Activated CD4-positive, alpha-beta T cell treated with anti-CD3 and anti-CD28 coated beads for 36 hours (primary cell): ENCODE measurements at regions of chr19 and their contacts with region 1.

Region 1: DNA sequence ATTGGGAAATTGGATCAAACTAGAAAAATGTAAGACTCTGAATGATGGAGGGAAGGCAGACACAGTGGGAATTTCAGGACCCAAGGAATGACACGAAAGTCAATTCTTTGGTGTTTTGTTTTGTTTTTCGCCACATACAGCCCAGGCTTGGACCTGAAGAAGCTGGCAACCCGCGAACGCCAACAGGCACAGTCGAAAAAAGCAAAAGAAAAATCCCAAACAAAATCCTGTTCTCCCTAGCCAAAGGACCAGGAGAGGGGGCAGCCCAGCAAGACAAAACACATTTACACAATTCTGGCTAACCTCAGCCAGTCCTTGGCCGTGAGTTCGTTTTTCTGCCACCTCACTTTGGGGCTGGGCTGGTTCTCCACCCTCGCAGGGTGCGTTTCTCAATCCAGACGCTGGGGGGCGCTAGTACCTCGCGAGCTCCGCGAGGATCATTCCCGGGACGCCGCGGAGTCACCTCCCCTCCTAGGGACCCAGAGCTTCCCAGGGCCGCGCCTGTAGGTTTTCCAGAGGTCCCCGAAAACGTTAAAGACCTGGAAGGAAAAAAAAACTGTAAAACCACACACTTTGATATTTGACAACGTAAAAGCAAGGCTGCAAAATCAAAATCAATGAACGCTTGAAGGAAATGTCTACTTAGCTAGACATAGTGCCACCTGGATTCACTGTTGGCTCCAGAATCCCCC is 34.9 kb upstream of the TPM4 start:
- DNase-seq: peak; percentile 87
- ATAC-seq: peak; percentile 85
- H3K4me3 Mint-ChIP-seq: no peak overlapping the region
- H3K27ac Mint-ChIP-seq: no peak overlapping the region
- H3K4me1 Mint-ChIP-seq: peaks cover 4% of the 10 kb centered on the region
- H3K27me3 Mint-ChIP-seq: peaks cover 2% of the 10 kb centered on the region

Region 2: DNA sequence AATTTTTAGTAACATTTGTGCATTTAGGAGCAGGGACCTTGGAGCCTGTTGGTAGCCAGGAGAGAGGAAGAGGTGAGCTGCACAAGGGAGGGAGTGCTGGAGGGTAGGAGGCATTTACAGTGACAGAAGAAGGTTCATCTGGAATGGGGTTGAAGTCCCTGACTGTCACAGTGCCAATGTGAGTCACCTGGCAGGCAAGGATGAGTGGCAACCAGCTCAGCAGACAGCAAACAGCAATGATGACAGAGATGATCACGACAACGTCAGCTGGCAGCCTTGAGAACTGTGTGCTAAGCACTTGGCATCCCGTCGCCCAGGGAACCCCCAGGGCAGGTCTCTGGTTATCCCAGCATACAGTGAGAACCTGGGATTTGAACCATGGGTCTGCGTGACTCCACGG is 251.3 kb before region 1 on chr19:
- CTCF ChIA-PET with region 1: no interaction called
- POLR2A ChIA-PET with region 1: no interaction called
- intact Hi-C with region 1: no loop called
- DNase-seq: no peak
- ATAC-seq: no peak
- H3K4me3 Mint-ChIP-seq: no peak overlapping the region
- H3K27ac Mint-ChIP-seq: no peak overlapping the region
- H3K4me1 Mint-ChIP-seq: no peaks in the 10 kb centered on the region
- H3K27me3 Mint-ChIP-seq: peaks cover 2% of the 10 kb centered on the region

Region 3: DNA sequence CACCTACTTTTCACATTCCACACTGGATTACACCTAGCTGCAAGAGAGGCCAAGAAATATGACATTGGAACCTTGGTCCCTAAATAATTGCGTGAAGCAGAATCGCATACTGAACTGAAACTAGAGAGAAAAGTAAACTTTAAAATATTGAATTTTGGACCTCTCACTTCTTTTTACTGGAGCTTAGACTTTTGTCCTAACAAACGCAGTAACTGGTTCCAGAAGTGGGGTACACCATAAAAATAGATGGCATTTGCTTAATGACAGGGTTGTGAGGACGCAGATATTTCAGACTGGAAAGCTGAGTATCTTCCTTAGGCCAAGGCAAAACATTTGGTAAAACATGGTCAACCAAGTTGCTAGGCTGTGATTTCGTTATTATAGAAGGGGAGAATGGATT is 15.6 kb after region 1 on chr19:
- CTCF ChIA-PET with region 1: interaction called, 23 read pairs
- POLR2A ChIA-PET with region 1: interaction called, 3 read pairs
- intact Hi-C with region 1: no loop called
- DNase-seq: no peak
- ATAC-seq: no peak
- H3K4me3 Mint-ChIP-seq: no peak overlapping the region
- H3K27ac Mint-ChIP-seq: no peak overlapping the region
- H3K4me1 Mint-ChIP-seq: peaks cover 4% of the 10 kb centered on the region
- H3K27me3 Mint-ChIP-seq: no peaks in the 10 kb centered on the region

Region 4: DNA sequence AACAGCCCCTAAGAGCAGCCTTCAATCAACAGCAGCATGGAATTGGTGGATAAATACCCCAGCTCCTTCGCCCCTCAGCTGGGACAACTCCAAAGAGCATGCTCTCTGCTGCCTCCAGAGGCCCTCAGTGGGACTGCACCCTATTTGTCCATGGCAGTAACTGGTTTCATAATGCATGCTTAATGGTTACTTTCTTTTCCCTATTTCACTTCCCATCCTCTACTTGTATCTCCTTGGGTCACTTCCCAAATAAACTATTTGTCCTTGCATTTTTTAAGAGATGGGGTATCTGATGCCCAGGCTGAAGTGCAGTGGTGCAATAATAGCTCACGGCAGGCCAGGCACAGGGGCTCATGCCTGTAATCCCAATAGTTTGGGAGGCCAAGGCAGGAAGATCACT is 21.3 kb after region 1 on chr19:
- CTCF ChIA-PET with region 1: interaction called, 23 read pairs
- POLR2A ChIA-PET with region 1: no interaction called
- intact Hi-C with region 1: no loop called
- DNase-seq: peak; percentile 84
- ATAC-seq: peak; percentile 38
- H3K4me3 Mint-ChIP-seq: no peak overlapping the region
- H3K27ac Mint-ChIP-seq: no peak overlapping the region
- H3K4me1 Mint-ChIP-seq: peaks cover 24% of the 10 kb centered on the region
- H3K27me3 Mint-ChIP-seq: no peaks in the 10 kb centered on the region

Region 5: DNA sequence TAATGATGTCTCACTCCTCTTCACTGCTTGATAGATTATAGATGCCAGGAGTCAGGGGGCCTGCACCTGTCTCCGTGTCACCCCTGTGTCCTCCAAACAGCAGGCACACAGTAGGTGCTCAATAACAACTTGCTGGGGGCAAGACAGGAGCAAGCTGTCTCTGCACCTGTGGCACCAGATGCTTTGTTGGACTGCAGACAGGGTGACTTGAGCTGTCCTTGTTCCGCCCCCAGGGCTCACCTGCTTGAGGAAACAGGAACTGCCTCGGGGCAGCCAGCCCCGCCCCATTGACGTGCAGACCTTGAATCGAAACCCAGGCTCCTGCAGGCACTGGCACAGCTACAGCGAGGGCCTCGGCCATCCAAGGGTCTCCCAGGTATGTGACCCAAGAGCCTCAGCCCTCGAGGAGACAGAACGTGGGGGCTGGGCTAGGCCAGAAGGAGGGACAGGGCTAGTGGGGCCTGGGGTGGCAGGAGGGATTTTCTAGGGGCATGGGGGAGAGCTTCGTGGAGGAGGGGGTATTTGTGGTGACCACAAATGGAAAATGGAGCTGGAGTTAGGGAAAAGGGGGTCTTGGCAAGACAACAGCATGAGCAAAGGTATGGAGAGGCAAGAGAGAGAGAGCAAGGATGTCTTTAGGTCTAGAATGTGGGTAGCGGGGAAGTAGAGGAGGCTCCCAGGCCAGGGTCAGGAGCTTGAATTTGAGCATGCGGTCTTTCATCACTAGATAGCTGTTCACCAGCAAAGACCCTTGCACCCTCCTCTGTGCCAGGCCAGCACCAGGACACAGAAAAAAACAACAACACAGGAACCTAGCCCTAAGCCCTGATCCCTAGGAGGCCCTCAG is 102.2 kb after region 1 on chr19 and contains the start of gene HSH2D:
- CTCF ChIA-PET with region 1: interaction called, 12 read pairs
- POLR2A ChIA-PET with region 1: no interaction called
- intact Hi-C with region 1: no loop called
- DNase-seq: peak; percentile 91
- ATAC-seq: peak; percentile 100
- H3K4me3 Mint-ChIP-seq: peak within 1 kb of the TSS; percentile 94
- H3K27ac Mint-ChIP-seq: peak within 1 kb of the TSS; percentile 93
- H3K4me1 Mint-ChIP-seq: peaks cover 24% of the 10 kb centered on the region
- H3K27me3 Mint-ChIP-seq: no peaks in the 10 kb centered on the region
- total RNA-seq, gene HSH2D: 31.2 to 38.2 TPM

Region 6: DNA sequence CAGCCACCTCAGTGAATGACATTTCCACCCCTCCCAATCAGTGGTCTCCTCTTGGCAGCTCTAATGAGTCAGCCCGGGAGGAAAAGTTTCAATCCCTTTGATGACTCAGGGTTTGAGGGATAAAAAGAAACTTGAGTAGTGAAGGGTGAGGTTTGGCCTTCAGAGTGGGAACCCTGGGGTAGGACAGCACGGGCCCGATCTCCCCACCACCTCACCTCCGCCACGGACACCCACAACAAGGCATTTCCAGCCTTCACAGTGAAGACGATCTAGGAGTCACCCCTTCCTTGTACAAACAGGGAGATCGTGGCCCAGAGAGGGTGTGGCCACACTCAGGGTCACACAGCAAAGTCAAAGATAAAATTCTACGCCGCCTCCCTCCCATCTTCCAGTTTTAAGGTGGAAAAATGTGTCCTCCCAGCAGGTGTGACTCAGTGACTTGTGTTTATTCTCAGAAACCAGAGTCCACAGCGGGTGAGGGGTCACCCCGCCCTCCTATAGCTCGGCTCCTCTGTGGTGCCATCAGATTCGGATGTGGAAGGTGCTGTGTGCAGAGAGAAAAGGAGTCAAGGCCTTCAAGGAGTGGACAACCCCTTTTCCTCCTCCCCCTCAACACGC is 119.6 kb after region 1 on chr19:
- CTCF ChIA-PET with region 1: interaction called, 4 read pairs
- POLR2A ChIA-PET with region 1: no interaction called
- intact Hi-C with region 1: loop called in 1 of 2 experiments (anchors 5 kb)
- DNase-seq: peak; percentile 73
- ATAC-seq: peak; percentile 86
- H3K4me3 Mint-ChIP-seq: peak overlapping the region; percentile 28
- H3K27ac Mint-ChIP-seq: peak overlapping the region; percentile 60
- H3K4me1 Mint-ChIP-seq: peaks cover 18% of the 10 kb centered on the region
- H3K27me3 Mint-ChIP-seq: no peaks in the 10 kb centered on the region

Region 7: DNA sequence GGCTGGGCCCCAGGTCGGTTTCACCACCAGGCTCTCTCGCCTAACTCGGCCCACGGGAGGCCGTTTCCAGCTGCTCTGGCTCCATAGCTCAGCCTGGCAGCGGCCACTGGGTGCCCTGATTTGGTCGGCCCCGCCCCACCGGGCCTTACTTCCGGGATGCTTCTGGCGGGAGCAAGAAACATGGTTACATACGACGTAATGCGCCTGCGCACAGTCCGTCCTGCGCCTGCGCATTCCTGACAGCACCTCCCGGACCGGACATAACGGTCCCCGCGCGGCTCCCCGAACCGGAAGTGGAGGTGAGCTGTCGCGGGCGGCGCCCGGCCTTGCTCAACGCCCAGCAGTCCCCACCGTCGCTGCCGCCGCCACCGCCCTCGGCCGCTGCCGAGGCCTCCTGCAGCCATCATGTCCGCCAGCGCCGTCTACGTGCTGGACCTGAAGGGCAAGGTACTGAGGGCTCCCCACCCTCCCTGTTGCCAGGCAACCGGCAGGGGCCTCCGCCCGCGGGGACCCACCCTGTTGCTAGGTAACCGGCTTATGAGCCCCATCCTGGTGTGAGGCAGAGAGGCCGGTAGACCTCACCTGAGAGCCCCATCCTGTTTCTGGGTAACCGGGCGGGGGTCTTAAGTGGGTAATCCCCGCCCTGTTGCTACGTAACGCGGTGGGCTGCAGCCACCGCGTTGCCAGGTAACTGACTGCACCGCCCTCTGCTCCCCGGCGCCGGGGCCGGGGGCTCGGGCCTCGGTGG is 156.4 kb after region 1 on chr19 and contains the start of gene AP1M1:
- CTCF ChIA-PET with region 1: interaction called, 4 read pairs
- POLR2A ChIA-PET with region 1: no interaction called
- intact Hi-C with region 1: loop called in 1 of 2 experiments (anchors 1 kb)
- DNase-seq: peak; percentile 99
- ATAC-seq: peak; percentile 95
- H3K4me3 Mint-ChIP-seq: peak within 1 kb of the TSS; percentile 83
- H3K27ac Mint-ChIP-seq: peak within 1 kb of the TSS; percentile 96
- H3K4me1 Mint-ChIP-seq: peaks cover 33% of the 10 kb centered on the region
- H3K27me3 Mint-ChIP-seq: no peaks in the 10 kb centered on the region
- total RNA-seq, gene AP1M1: 61.8 to 92.0 TPM